Activated CD8-positive, alpha-beta T cell treated with anti-CD3 and anti-CD28 coated beads, Interleukin-2, amount 10 ng/mL, durations not matched to agents 7 days and 5 days (primary cell): ENCODE measurements at regions of chr1 and their contacts with region 1.

Region 1: DNA sequence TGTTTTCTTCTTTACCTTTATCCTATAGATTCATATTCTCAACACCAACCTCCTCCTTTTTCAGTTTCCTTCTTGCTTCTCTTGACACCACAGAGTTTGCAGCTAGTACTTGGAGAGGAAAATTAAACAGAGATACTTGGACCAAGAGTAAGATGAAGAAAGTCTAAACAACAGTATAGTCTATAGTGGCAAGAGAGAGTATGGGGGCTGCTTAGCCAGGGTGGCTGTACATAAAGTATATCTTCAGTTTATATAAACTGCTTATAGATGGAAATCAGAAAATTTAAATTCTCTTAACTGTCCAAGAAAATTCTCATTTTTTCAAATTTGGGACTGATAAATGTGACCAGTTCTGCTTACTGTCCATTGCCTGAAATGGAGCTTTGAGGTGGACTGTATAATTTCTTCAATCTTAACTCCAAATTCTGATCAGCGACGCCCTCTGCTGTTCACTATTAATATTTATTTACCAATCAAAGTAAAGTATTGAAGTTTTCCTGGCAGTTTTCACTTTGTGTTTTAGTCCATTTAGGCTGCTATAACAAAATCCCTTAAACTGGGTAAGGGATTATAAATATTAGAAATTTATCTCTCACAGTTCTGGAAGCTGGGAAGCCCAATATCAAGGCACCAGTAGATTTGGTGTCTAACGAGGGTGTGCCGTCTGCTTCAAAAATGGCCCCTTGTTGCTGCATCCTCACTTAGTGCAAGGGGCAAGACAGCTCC is 14.8 kb upstream of the METTL18 start:
- DNase-seq: peak; percentile 28
- ATAC-seq: no peak
- H3K4me3 Mint-ChIP-seq: no peak overlapping the region
- H3K27ac Mint-ChIP-seq: no peak overlapping the region
- H3K4me1 Mint-ChIP-seq: peaks cover 8% of the 10 kb centered on the region
- H3K27me3 Mint-ChIP-seq: no peaks in the 10 kb centered on the region

Region 2: DNA sequence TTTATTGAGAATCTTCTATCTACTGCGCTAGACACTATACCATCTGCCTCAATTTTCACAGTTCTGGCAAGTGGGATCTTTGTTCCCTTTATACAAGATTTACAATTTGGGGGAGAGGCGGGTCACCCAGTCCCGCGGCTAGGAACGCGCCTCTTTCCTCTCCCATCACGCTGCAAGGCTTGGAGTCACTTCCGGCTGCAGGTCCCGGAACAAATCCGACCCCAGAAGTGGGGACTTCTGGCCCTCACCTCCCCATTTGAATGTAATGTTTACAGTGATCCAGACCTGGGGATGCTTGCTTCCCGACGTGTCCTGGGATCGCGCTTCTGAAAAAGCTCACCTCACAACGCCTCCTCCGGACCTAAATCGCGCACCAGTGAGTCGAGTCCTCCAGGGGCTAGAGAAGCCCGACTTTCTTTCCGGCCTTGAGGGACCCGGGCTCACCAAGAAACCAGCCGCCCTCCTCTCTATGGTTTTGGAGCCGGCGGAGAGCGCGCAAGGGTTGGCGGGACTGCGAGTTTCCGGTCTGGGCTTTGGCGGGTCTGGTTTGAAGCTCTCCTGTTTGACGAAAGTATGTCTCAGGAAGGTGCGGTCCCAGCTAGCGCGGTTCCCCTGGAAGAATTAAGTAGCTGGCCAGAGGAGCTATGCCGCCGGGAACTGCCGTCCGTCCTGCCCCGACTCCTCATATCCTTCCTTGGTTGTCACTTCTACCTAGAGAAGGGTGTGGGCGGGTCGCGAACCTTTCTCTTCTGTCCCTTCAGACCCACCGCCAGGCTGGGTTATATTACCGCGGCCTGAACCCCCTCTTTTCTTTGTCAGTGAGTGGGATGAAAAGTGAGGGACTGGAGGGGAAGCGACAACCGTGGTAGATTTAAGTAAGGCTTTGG is 14.8 kb before region 1 on chr1 and contains the start of gene METTL18:
- CTCF ChIA-PET with region 1: interaction called, 25 read pairs
- POLR2A ChIA-PET with region 1: interaction called, 4 read pairs
- DNase-seq: peak; percentile 96
- ATAC-seq: peak; percentile 96
- H3K4me3 Mint-ChIP-seq: peak within 1 kb of the TSS; percentile 80
- H3K27ac Mint-ChIP-seq: peak within 1 kb of the TSS; percentile 85
- H3K4me1 Mint-ChIP-seq: peaks cover 54% of the 10 kb centered on the region
- H3K27me3 Mint-ChIP-seq: no peaks in the 10 kb centered on the region
- total RNA-seq, gene METTL18: 9.8 to 10.2 TPM

Region 3: DNA sequence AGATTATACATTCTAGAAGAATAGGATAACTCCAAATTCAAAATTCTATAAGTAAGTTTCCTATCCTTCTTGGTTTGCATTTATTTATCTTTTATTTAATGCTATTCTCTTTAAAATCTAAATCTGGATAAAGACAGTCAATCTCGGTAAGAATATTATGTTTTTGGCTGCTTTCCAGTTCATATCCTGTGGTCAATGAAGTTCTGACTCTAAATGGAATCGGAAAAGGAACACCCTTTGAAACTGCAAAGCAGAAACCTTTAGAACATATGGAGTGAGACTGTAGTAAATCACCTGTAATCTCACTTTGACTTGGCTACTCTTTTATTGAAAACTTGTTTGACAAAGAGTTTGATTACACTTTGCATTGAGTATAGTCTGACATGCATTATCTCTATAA is 179.7 kb after region 1 on chr1:
- CTCF ChIA-PET with region 1: no interaction called
- POLR2A ChIA-PET with region 1: no interaction called
- DNase-seq: no peak
- ATAC-seq: no peak
- H3K4me3 Mint-ChIP-seq: no peak overlapping the region
- H3K27ac Mint-ChIP-seq: no peak overlapping the region
- H3K4me1 Mint-ChIP-seq: no peaks in the 10 kb centered on the region
- H3K27me3 Mint-ChIP-seq: no peaks in the 10 kb centered on the region